H1 (cell line): ENCODE measurements at regions of chr21 and their contacts with region 1.

Region 1: GRCh38 chr21:43975495-43975993 is 36.6 kb upstream of the TRAPPC10 start:
- DNase-seq: peak in 1 of 2 experiments; percentile 94
- H3K4me3 ChIP-seq: peak overlapping the region in 2 of 4 experiments; percentile 11 to 56; a peak in 4 of 8 replicates
- H3K27ac ChIP-seq: no peak overlapping the region
- H3K4me1 ChIP-seq: no peaks in the 10 kb centered on the region; a peak in 1 of 7 replicates
- H3K27me3 ChIP-seq: no peaks in the 10 kb centered on the region
- CTCF ChIP-seq: peak; percentile 85 to 93 (median 87)
- EP300 ChIP-seq: no peak
- POLR2A ChIP-seq: no peak
- RAD21 ChIP-seq: peak; percentile 89 to 90

Region 2: GRCh38 chr21:43810505-43811261 is 164.9 kb before region 1 on chr21:
- CTCF ChIA-PET with region 1: interaction called, 15 read pairs
- POLR2A ChIA-PET with region 1: interaction called, 3 read pairs
- DNase-seq: peak; percentile 41 to 100
- H3K4me3 ChIP-seq: no peak overlapping the region; a peak in 1 of 8 replicates
- H3K27ac ChIP-seq: no peak overlapping the region
- H3K4me1 ChIP-seq: peaks cover 0 to 15% (median 12%) of the 10 kb centered on the region in 4 experiments; a peak in 6 of 7 replicates
- H3K27me3 ChIP-seq: no peaks in the 10 kb centered on the region
- CTCF ChIP-seq: peak in 2 of 3 experiments; percentile 92 to 97; a peak in 3 of 4 replicates
- EP300 ChIP-seq: no peak
- POLR2A ChIP-seq: no peak
- RAD21 ChIP-seq: peak; percentile 97 to 99

Region 3: DNA sequence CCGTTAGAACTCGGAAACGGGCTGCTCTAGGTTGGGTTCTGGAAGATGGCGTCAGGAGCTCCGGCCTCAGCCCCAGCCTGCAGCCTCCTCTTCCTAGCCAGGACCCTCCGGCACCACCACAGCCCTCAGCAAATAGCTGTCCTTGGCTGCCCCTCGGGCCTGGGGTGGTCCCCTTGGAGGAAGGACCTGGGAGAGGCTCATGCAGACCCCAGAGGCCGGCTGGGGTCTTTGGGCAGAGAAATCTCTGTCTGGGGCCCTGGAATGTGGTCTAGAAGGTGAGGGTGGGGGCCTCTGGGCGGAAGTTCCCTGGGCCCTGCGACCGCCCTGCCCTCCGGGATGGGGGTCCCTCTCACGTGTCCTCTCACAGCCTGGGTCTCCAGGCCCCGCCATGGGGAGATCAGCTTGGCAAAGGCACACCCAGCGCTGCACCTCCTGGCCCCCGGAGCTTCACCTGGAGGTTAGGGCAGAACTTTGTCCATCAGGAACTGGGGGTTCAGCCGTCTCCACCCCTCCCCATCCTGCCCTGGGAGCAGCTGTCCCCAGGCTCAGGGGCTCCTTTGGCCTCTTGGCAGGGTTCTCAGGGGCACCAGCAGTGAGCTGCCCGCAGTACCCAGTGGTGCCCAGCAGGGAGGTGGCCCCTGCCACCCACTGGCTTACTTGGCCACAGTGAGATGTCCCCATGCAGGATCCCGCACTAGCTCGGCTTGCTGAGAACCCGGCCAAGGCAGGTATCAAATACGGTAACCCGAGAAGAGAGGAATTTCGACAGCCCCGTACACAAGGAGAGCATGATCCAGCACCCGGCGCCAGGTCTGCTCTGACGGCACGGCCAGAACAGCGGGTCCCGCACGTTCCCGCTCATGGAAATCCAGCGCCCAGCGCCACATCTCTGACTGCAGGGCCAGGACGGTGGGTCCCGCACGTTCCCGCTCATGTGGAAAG is 149.6 kb before region 1 on chr21:
- CTCF ChIA-PET with region 1: interaction called, 12 read pairs
- POLR2A ChIA-PET with region 1: no interaction called
- DNase-seq: no peak
- H3K4me3 ChIP-seq: no peak overlapping the region
- H3K27ac ChIP-seq: no peak overlapping the region
- H3K4me1 ChIP-seq: peaks cover 0 to 7% (median 4%) of the 10 kb centered on the region in 4 experiments; a peak in 3 of 7 replicates
- H3K27me3 ChIP-seq: no peaks in the 10 kb centered on the region
- CTCF ChIP-seq: peak in 2 of 3 experiments; percentile 27 to 31; a peak in 2 of 4 replicates
- EP300 ChIP-seq: no peak
- POLR2A ChIP-seq: no peak
- RAD21 ChIP-seq: 0 out of 4 replicates have a peak, but pooled peaks of 1 of the 2 experiments have one; percentile 2